ENCODE measurements at regions of chr15 and their contacts with region 1.

Region 1: DNA sequence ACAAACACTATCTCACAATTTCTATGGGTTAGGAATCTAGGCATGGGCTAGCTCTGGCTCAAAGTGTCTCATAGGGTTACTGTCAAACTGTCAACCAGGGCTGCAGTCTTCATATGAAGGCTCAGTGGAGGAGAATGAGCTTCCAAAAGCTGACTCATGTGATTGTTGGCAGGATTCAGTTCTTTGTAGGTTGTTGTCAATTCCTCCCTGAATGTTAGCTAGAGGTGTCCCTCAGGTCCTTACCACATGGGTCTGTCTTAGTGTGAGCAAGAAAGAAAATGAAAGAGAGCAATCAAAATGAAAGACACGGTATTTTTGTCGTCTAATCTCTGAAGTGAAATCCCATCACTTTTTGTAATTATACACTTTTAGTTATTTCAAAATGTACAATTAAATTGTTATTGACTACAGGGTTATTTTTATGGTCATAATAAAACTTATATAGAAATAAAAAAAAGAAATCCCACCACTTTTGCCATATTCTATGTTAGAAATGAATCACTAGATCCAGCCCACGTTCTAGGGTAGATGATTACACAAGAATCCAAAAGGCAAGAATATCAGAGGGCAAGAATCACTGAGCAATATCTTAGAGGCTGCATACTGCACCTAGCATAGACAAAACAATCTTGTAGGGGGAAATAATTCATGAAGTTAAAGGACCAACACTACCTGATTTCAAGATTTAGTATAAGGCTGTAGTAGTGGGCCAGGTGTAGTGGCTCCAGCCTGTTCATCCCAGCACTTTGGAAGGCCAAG is 8.4 kb downstream of the ACSBG1 start:
- DNase-seq: no peak
- ATAC-seq: 0 out of 2 replicates have a peak, but pooled peaks have one; percentile 64
- H3K4me3 ChIP-seq: no peak overlapping the region
- H3K27ac ChIP-seq: no peak overlapping the region
- H3K4me1 ChIP-seq: peaks cover 3% of the 10 kb centered on the region; the same call in 1 of the 2 replicates
- H3K27me3 ChIP-seq: no peaks in the 10 kb centered on the region
- CTCF ChIP-seq: no peak

Region 2: DNA sequence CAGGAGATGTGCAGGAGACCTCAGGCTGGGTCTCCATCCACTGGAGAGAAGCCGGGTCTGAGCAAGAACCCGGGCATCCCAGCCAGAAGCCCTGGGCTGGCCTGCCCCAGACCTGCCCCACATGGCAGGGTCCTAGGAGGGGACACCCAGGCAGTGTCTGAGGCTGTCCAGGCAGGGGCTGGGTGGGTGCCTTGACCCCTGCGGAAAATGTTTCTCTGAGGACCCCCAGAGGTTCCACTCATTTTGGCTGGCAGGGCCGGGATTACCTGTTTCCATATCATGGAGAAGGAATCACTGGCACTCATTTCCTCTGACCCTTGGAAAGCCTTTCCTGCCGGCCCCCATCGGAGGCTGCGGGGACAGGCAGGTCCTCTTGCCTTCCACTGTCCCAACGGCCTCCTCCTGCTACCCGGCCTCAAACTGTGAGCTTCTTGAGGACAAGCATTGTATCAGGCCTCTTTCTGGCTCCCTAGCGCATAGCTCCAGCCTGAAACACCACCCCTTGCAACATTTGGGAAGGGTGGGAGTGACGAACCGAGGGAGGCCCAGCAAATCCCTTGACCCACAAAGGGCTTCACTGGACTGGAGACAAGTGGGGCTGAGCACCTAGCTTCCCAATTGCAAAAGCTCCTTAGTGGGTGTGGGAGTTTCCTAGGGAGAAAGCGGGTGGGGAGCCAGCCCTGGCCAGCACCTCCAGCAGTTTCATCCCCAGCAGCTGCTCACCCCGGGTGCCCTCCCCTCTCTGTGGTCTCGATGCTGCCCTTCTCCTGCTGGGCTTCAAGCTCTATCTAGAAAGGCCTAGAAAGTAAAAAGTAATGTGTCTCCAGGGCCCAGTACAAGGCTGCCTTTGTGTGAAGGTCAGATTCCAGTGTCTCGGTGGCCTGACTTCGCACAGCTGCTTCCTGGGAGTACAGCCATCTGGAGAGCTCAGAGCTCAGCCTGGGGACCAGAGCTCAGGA is 21.3 kb before region 1 on chr15:
- CTCF ChIA-PET with region 1: no interaction called
- POLR2A ChIA-PET with region 1: interaction called, 15 read pairs
- in situ Hi-C with region 1: no loop called
- intact Hi-C with region 1: no loop called
- DNase-seq: no peak
- ATAC-seq: 0 out of 2 replicates have a peak, but pooled peaks have one; percentile 10
- H3K4me3 ChIP-seq: no peak overlapping the region
- H3K27ac ChIP-seq: peak overlapping the region; percentile 17; the same call in 1 of the 2 replicates
- H3K4me1 ChIP-seq: peaks cover 24% of the 10 kb centered on the region
- H3K27me3 ChIP-seq: no peaks in the 10 kb centered on the region
- CTCF ChIP-seq: no peak

Region 3: GRCh38 chr15:78315686-78316282 is 89.8 kb after region 1 on chr15:
- CTCF ChIA-PET with region 1: no interaction called
- POLR2A ChIA-PET with region 1: no interaction called
- in situ Hi-C with region 1: no loop called
- intact Hi-C with region 1: no loop called
- DNase-seq: no peak
- ATAC-seq: peak; percentile 75
- H3K4me3 ChIP-seq: no peak overlapping the region
- H3K27ac ChIP-seq: peak overlapping the region; percentile 23; the same call in 1 of the 2 replicates
- H3K4me1 ChIP-seq: no peaks in the 10 kb centered on the region; the same call in 1 of the 2 replicates
- H3K27me3 ChIP-seq: no peaks in the 10 kb centered on the region
- CTCF ChIP-seq: peak; percentile 68

Region 4: DNA sequence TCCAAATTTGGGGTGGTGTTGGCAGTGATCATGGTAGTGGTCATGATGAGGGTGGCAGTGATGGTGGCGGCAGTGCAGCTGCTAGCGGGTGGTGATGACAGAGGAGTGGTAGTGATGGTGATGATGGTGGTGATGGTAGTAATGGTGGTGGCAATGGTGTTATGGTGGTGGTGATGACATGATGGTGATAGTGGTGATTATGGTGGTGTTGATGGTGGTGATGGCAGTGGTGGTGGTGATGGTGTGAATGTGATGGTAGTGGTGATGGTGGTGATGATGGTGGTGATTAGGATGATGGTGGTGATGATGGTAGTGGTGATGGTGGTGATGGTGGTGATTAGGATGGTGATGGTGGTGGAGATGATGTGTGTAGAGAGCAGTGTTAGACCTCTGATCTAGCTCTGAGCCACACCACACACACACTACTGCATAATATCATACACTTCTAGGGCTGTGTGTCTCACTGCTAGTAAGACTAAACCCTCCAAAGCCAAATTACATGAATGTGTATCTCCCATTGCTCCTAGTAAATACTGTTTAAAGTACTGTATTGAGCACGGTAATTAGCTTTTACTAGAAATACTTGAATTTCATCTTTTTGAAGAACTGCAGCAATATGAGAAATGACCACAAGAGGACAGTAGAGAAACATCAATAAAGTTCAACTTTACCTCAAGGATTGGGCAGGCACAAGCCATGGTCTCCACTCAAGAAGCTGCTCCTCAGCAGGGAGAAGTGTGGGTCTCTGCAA is 1113.8 kb after region 1 on chr15:
- CTCF ChIA-PET with region 1: no interaction called
- POLR2A ChIA-PET with region 1: no interaction called
- in situ Hi-C with region 1: no loop called
- intact Hi-C with region 1: no loop called
- DNase-seq: peak; percentile 36
- ATAC-seq: peak; percentile 62; the same call in 1 of the 2 replicates
- H3K4me3 ChIP-seq: no peak overlapping the region
- H3K27ac ChIP-seq: no peak overlapping the region
- H3K4me1 ChIP-seq: no peaks in the 10 kb centered on the region
- H3K27me3 ChIP-seq: no peaks in the 10 kb centered on the region
- CTCF ChIP-seq: peak; percentile 89